ENCODE measurements at regions of chr11 and their contacts with region 1.

Region 1: GRCh38 chr11:20127671-20128527 is 32.4 kb downstream of the DBX1 start:
- DNase-seq: peak; percentile 42
- H3K4me3 ChIP-seq: no peak overlapping the region
- H3K27ac ChIP-seq: no peak overlapping the region
- H3K4me1 ChIP-seq: peaks cover 14% of the 10 kb centered on the region
- H3K27me3 ChIP-seq: no peaks in the 10 kb centered on the region
- CTCF ChIP-seq: peak; percentile 88 to 91

Region 2: DNA sequence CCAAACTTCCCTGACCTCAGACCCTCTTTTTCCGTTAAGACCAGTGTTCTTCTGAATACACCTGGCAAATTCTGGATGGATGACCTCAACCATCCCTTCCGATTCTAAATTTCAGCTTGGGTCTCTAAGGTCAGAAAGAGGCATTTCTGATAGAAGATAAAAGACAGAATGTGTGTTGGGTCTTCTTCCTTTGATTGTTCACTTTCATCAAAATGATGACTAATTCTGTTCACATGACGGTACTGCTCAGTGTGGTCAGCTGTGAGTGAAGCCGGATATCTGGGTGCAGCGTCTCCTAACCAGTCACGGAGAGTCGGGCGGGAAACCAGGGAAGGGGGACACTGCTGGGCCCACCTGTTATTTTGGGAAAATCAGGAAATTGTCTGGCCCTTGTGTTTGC is 566.9 kb before region 1 on chr11:
- CTCF ChIA-PET with region 1: no interaction called
- dilution Hi-C with region 1: no loop called
- in situ Hi-C with region 1: loop called (anchors 10 to 25 kb)
- intact Hi-C with region 1: loop called (anchors 1 kb)
- DNase-seq: no peak
- H3K4me3 ChIP-seq: no peak overlapping the region
- H3K27ac ChIP-seq: no peak overlapping the region
- H3K4me1 ChIP-seq: peaks cover 5% of the 10 kb centered on the region
- H3K27me3 ChIP-seq: no peaks in the 10 kb centered on the region
- CTCF ChIP-seq: no peak

Region 3: GRCh38 chr11:19742588-19743292 is 385.2 kb before region 1 on chr11:
- CTCF ChIA-PET with region 1: no interaction called
- dilution Hi-C with region 1: no loop called
- in situ Hi-C with region 1: no loop called
- intact Hi-C with region 1: loop called (anchors 1 kb)
- DNase-seq: peak; percentile 67
- H3K4me3 ChIP-seq: no peak overlapping the region
- H3K27ac ChIP-seq: no peak overlapping the region
- H3K4me1 ChIP-seq: peaks cover 7% of the 10 kb centered on the region
- H3K27me3 ChIP-seq: no peaks in the 10 kb centered on the region
- CTCF ChIP-seq: peak; percentile 86 to 89

Region 4: GRCh38 chr11:19938169-19938856 is 189.6 kb before region 1 on chr11:
- CTCF ChIA-PET with region 1: interaction called, 4 read pairs
- dilution Hi-C with region 1: no loop called
- in situ Hi-C with region 1: loop called in 1 of 2 experiments (anchors 25 kb)
- intact Hi-C with region 1: loop called (anchors 1 kb)
- DNase-seq: peak; percentile 46
- H3K4me3 ChIP-seq: no peak overlapping the region
- H3K27ac ChIP-seq: peak overlapping the region; percentile 0
- H3K4me1 ChIP-seq: peaks cover 23% of the 10 kb centered on the region
- H3K27me3 ChIP-seq: no peaks in the 10 kb centered on the region
- CTCF ChIP-seq: peak; percentile 85 to 93

Region 5: DNA sequence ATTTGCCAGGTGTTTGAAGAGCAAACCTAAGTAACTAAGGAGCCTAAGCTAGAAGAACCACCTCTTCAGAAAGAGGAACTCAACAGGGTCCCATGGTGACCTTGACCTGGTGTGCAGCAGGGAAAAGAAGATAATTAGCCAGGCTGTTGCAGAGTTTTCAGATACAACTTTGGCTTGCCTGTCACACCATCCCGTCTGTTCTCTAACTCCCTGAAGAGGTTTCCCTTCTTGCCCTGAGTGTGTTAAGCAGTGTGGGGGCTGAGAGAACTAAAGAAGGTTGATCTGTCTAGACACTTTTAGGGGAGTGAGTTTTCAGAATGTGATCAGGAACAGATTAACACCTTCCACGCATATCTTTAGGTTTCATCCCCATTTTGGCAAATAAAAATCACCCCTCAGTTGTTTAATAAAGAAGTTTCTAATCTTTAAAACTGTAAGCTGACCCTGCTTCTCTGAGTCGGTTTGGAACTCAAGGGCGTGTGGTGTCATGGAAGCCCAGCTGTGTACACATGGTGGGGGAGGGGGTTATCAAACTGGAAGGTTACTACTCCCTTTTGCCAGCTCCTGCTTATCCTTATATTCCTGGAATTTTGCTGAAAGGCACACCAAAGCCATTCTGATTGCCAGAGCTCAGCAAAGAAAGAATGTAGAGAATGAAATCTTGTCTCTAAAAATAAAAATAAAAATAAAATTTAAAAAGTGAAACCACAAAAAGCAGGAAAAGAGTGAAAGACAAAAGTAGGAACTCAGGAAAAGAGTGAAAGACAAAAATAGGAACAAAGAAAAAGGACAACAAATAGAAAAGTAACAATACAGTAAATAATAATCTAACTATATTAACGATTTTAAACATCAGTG is 37.9 kb before region 1 on chr11:
- CTCF ChIA-PET with region 1: no interaction called
- dilution Hi-C with region 1: no loop called
- in situ Hi-C with region 1: no loop called
- intact Hi-C with region 1: no loop called
- DNase-seq: no peak
- H3K4me3 ChIP-seq: no peak overlapping the region
- H3K27ac ChIP-seq: no peak overlapping the region
- H3K4me1 ChIP-seq: no peaks in the 10 kb centered on the region
- H3K27me3 ChIP-seq: no peaks in the 10 kb centered on the region
- CTCF ChIP-seq: no peak

Region 6: GRCh38 chr11:20337526-20338154 is 209.7 kb after region 1 on chr11:
- CTCF ChIA-PET with region 1: no interaction called
- dilution Hi-C with region 1: no loop called
- in situ Hi-C with region 1: loop called in 1 of 2 experiments (anchors 10 kb)
- intact Hi-C with region 1: loop called (anchors 1 kb)
- DNase-seq: peak; percentile 8
- H3K4me3 ChIP-seq: no peak overlapping the region
- H3K27ac ChIP-seq: no peak overlapping the region
- H3K4me1 ChIP-seq: no peaks in the 10 kb centered on the region
- H3K27me3 ChIP-seq: peaks cover 14% of the 10 kb centered on the region
- CTCF ChIP-seq: peak; percentile 35 to 45

Region 7: DNA sequence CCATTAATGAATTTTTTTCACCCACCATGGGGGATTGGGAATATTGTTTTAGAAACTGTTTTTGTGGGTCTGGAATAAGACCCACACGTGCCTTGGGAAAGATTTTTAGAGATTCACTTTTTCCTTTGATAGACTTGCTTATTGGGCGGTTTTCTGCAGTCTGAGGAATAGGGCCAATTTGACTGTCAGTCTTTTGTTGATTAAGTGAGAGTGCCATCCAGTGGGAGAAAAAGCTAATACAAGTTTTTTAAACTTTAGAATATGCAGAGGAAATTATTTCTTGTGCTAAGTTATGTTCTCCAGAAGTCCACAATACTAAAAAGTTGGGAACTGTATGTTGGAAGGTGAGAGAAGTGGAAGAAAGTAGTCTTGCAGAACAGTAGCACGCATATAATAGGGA is 315.7 kb after region 1 on chr11:
- CTCF ChIA-PET with region 1: no interaction called
- dilution Hi-C with region 1: no loop called
- in situ Hi-C with region 1: no loop called
- intact Hi-C with region 1: loop called (anchors 5 kb)
- DNase-seq: peak; percentile 4
- H3K4me3 ChIP-seq: no peak overlapping the region
- H3K27ac ChIP-seq: no peak overlapping the region
- H3K4me1 ChIP-seq: no peaks in the 10 kb centered on the region
- H3K27me3 ChIP-seq: no peaks in the 10 kb centered on the region
- CTCF ChIP-seq: peak; percentile 39 to 43

Region 8: DNA sequence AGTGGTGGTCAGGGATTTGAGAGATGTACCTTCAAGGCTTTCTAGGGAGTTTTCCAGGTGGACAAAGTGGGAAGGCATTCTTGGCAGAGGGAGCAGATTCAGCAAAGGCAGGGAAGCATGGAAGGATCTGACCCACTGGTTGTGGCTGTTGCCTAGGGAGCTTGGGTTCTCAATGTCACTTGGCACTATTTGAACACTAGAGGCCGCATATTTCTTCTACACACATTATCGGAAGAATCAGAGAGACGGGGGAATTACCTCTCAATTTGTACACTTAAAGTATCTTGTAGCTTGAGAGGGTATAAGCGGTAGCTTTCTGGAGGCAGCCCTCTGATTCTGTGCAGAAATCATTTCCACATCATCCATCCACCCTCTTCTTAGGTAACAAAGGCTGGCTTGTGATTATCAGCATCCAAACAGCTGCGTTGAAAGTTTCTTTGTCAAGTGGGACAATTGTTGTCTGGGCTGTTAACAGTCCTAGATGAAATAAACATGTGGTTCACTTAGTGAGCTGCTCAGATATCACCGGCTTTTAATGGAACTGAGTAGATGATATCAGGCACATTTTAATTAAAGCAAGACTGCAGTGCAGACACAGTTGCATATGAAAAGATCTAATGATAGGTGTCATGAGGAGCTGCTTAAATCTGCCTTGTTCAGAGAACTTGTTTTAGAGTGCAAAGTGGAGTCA is 544.1 kb after region 1 on chr11:
- CTCF ChIA-PET with region 1: no interaction called
- dilution Hi-C with region 1: no loop called
- in situ Hi-C with region 1: no loop called
- intact Hi-C with region 1: loop called (anchors 5 kb)
- DNase-seq: peak; percentile 6
- H3K4me3 ChIP-seq: no peak overlapping the region
- H3K27ac ChIP-seq: no peak overlapping the region
- H3K4me1 ChIP-seq: peaks cover 8% of the 10 kb centered on the region
- H3K27me3 ChIP-seq: peaks cover 39% of the 10 kb centered on the region
- CTCF ChIP-seq: peak; percentile 25 to 43